ENCODE measurements at regions of chr3 and their contacts with region 1.

Region 1: DNA sequence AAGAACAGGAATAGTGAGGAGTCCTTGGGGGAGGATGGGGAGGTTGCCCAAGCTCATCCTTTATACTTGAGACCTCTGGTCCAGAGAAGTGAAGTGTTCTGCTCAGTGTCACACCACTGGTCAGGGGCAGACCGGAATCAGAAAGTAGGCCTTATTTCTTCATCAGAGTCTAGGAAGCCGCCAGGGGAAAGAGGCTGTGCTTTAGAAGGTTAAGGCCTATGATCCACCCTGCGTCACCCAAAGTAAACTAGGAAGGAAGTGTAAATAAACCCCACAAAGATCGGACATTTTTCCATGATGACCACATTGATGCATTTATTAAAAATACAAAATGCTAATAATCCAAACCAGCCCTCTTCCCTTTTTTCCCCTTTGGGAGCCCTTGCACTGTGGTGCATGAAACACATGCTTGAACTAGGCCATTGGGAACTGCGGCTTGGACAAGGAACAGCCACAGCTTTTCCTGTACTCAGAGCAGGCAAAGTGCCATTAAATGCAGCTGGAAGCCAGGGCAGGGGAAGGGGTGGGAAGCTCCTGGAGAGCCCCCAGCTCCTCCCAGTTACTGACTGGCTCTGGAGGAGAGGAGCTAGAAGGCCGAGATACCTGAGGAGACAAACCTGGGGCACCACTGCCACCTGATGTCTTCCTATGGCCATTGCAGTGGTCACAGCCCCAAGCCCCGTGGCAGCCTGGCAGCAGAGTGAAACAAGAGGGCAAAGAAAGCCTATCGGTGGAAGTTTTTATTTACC is 37.0 kb downstream of the CDC25A start:
- DNase-seq: peak; percentile 75
- ATAC-seq: peak; percentile 97
- H3K4me3 ChIP-seq: no peak overlapping the region
- H3K27ac ChIP-seq: no peak overlapping the region
- H3K4me1 ChIP-seq: peaks cover 15 to 32% of the 10 kb centered on the region in 2 experiments
- H3K27me3 ChIP-seq: no peaks in the 10 kb centered on the region
- CTCF ChIP-seq: peak; percentile 74 to 92 (median 85); a peak in 5 of 6 replicates
- POLR2A ChIP-seq: no peak
- RAD21 ChIP-seq: peak; percentile 97

Region 2: GRCh38 chr3:47420511-47421484 is 730.4 kb before region 1 on chr3:
- CTCF ChIA-PET with region 1: interaction called, 8 read pairs
- POLR2A ChIA-PET with region 1: no interaction called
- RAD21 ChIA-PET with region 1: no interaction called
- intact Hi-C with region 1: loop called (anchors 2 kb)
- DNase-seq: peak; percentile 70
- ATAC-seq: peak; percentile 84
- H3K4me3 ChIP-seq: no peak overlapping the region
- H3K27ac ChIP-seq: peak overlapping the region; percentile 51
- H3K4me1 ChIP-seq: peaks cover 5 to 17% of the 10 kb centered on the region in 2 experiments; a peak in 2 of 4 replicates
- H3K27me3 ChIP-seq: no peaks in the 10 kb centered on the region
- CTCF ChIP-seq: peak; percentile 85 to 97 (median 95)
- POLR2A ChIP-seq: no peak
- RAD21 ChIP-seq: peak; percentile 86

Region 3: DNA sequence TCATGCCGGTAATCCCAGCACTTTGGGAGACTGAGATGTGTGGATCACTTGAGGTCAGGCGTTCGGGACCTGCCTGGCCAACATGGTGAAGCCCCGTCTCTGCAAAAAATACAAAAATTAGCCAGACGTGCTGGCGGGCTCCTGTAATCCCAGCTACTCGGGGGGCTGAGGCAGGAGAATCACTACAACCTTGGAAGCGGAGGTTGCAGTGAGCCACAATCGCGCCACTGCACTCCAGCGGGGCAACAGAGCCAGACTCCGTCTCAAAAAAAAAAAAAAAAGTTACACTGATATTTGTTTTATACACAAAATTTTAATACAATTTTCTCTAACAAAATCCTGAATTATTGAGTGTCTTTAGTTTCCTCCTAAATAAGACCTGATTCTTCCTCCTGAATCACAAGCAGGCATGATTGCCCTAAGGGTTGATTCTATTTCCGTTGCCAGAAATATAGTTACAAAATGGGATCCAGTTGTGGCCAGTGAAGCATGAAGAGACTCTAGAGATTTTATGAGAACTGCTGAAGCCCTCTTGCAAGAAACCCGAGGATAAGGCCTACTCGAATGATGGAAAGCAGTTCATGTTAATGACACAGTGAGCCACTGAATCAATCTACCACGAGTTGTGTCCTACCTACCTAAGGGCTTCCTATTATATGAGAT is 359.9 kb before region 1 on chr3:
- CTCF ChIA-PET with region 1: interaction called, 10 read pairs
- POLR2A ChIA-PET with region 1: no interaction called
- RAD21 ChIA-PET with region 1: interaction called, 3 to 4 read pairs
- intact Hi-C with region 1: no loop called
- DNase-seq: no peak
- ATAC-seq: no peak
- H3K4me3 ChIP-seq: no peak overlapping the region
- H3K27ac ChIP-seq: no peak overlapping the region
- H3K4me1 ChIP-seq: peaks cover 8 to 19% of the 10 kb centered on the region in 2 experiments
- H3K27me3 ChIP-seq: no peaks in the 10 kb centered on the region
- CTCF ChIP-seq: no peak
- POLR2A ChIP-seq: no peak
- RAD21 ChIP-seq: no peak

Region 4: GRCh38 chr3:47836986-47837385 is 314.2 kb before region 1 on chr3:
- CTCF ChIA-PET with region 1: interaction called, 47 read pairs
- POLR2A ChIA-PET with region 1: interaction called, 4 read pairs
- RAD21 ChIA-PET with region 1: interaction called, 3 to 6 read pairs
- intact Hi-C with region 1: loop called (anchors 1 kb)
- DNase-seq: no peak
- ATAC-seq: peak; percentile 16; the same call in 1 of the 2 replicates
- H3K4me3 ChIP-seq: no peak overlapping the region
- H3K27ac ChIP-seq: no peak overlapping the region
- H3K4me1 ChIP-seq: no peaks in the 10 kb centered on the region
- H3K27me3 ChIP-seq: no peaks in the 10 kb centered on the region
- CTCF ChIP-seq: no peak
- POLR2A ChIP-seq: no peak
- RAD21 ChIP-seq: no peak

Region 5: DNA sequence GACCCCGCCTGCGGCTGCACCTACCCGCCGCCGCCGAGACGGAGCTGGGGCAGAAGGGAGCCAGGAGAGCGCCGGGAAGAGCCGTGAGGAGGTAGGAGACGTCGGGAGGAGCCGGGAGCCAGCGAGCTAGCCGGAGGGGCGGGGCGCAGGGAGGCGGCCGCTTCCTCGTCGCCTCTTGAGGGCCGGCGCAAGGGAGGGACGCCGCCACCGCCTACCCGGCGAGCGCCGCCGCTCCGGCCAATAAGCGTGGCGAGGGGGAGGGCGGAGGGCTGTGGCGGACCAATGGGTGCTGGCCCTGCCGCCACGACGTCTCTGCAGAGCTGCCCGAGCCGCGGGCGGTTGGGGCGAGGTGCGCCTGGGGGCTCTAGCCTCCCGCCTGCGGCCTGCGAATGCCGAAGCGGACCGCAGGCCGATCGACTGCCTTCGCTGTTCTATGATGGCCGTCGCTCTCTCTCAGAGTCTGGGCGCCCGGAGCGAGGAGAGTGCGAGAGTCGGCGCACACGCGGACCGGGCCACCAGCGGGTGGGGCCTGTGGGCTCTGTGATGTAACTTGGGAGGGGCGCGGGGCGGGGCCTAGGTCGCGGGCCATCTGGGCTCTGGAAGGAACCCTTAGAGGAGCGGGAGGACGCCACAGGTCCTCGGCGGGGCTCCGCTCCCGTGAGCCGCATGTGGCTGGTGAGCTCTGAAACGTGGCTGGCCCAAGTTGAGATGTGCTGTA is 62.3 kb before region 1 on chr3:
- CTCF ChIA-PET with region 1: interaction called, 4 read pairs
- POLR2A ChIA-PET with region 1: interaction called, 3 read pairs
- RAD21 ChIA-PET with region 1: interaction called, 3 to 4 read pairs
- intact Hi-C with region 1: loop called (anchors 2 kb)
- DNase-seq: peak; percentile 89
- ATAC-seq: peak; percentile 96
- H3K4me3 ChIP-seq: peak overlapping the region; percentile 94 to 96
- H3K27ac ChIP-seq: peak overlapping the region; percentile 97
- H3K4me1 ChIP-seq: peaks cover 11 to 23% of the 10 kb centered on the region in 2 experiments
- H3K27me3 ChIP-seq: no peaks in the 10 kb centered on the region
- CTCF ChIP-seq: no peak
- POLR2A ChIP-seq: peak; percentile 89
- RAD21 ChIP-seq: no peak

Measured in HCT116 (cell line).